Mammary epithelial cell (primary cell): ENCODE measurements at regions of chr19 and their contacts with region 1.

Region 1: DNA sequence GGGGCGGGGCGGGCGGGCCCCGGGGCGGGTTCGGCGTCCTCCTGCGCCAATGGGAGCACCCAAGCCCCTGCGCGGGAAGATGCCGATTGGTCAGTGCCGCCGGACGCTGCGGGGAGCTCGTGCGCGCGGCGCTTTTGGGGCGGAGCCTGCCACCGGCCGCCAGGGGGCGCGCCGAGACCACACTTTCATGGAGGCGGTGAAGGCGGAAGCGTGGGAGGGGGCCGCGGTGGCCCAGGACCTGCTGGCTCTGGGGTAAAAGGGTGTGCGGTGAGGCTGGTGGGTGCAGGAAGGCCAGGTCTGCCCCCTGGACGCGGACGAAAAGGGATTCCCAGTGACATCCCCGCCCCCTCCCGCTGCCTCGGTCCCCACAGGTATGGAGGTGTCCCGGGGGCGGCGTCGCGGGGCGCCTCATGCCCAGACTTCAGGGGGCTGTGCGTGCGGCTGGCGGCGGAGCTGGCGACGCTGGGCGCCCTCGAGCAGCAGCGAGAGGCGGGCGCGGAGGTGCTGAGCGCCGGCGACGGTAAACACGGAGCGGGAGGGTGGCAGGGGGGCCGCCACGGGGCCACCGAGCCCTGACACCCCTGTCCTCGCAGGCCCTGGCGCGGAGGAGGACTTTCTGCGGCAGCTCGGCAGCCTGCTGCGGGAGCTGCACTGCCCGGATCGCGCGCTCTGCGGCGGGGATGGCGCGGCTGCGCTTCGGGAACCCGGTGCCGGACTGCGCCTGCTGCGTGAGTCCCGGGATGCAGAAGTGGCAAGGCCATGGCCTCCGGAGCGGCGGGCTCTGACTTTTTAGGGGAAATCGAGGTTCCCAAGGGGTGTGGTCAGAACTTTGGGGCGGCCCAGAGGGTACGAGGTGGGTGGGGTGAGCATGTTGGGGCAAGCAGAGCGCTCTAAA is at the start of gene FAM98C:
- DNase-seq: peak; percentile 94
- H3K4me3 ChIP-seq: peak within 1 kb of the TSS; percentile 58 to 94 (median 83)
- H3K27ac ChIP-seq: no peak within 1 kb of the TSS
- H3K4me1 ChIP-seq: no peaks in the 10 kb centered on the region
- H3K27me3 ChIP-seq: no peaks in the 10 kb centered on the region
- CTCF ChIP-seq: peak; percentile 76 to 93
- total RNA-seq, gene FAM98C: 10.5 to 14.9 TPM

Region 2: DNA sequence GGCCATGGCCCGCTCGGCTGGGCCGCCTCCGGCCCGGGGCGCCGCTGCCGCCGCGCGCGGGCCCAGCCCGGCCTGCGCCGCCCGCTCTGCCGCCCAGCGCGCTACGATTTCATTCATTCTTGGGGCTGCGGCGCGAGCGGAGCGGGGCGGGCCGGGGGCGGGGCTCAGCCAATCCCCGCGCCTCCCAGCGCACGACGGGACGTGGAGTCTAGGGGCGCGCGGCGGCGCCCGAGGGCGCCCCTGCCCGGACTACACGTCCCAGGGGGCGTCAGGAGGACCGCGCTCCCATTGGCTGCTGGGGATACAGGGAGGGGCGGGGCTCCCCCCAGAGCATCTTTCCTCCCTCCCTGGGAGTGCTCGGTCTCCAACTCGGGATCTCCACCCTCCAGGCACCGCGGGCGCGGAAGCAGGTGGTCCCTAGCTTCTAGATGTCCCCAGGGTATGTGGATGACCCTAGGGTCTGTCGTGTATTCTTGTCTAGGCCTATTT is 173.6 kb before region 1 on chr19:
- CTCF ChIA-PET with region 1: interaction called, 12 read pairs
- dilution Hi-C with region 1: no loop called
- in situ Hi-C with region 1: no loop called
- intact Hi-C with region 1: loop called (anchors 5 kb)
- DNase-seq: peak; percentile 79
- H3K4me3 ChIP-seq: no peak overlapping the region
- H3K27ac ChIP-seq: no peak overlapping the region
- H3K4me1 ChIP-seq: peaks cover 14% of the 10 kb centered on the region
- H3K27me3 ChIP-seq: peaks cover 12% of the 10 kb centered on the region
- CTCF ChIP-seq: no peak

Region 3: DNA sequence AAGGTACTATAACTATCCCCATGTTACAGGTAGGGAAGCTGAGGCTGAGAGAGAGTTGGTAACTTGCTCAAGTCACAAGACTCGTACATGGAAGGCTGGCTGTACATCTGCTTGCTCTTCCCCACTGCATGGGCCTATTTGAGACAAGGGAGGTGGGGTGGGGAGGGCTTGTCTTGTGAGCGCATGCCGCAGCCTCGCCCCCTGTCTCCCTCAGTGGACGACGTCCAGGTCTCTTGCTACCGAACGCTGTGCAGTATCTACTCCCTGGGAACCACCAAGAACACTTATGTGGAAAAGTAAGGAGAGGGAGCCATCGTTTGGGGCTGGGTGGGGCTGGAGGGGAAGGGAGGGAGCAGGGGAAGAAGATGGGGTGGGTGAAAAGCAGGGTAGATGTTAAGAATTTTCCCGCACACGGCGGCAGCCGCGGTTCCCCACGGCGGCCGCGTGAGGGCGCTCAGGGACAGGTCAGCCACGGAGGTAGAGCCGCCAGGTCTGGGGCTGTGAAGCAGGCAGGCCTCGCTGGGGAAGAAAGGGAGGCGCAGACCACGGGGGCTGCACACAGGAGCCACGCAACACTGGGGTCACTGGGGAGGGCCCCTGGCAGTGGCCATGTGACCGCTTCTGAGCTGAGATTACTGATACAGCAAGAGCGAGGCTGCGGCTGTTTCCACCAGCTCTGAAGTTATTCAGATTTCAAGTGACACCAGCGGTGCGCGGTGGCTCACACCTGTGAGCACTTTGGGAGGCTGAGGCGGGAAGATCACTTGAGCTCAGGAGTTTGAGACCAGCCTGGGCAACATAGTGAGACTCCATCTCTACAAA is 111.8 kb after region 1 on chr19:
- CTCF ChIA-PET with region 1: no interaction called
- dilution Hi-C with region 1: no loop called
- in situ Hi-C with region 1: no loop called
- intact Hi-C with region 1: loop called (anchors 2 kb)
- DNase-seq: peak; percentile 45
- H3K4me3 ChIP-seq: peak overlapping the region in 1 of 3 experiments; percentile 4
- H3K27ac ChIP-seq: no peak overlapping the region
- H3K4me1 ChIP-seq: no peaks in the 10 kb centered on the region
- H3K27me3 ChIP-seq: no peaks in the 10 kb centered on the region
- CTCF ChIP-seq: peak; percentile 62 to 90

Region 4: GRCh38 chr19:38618590-38619360 is 215.6 kb after region 1 on chr19 and contains the start of gene EIF3K:
- CTCF ChIA-PET with region 1: no interaction called
- dilution Hi-C with region 1: no loop called
- in situ Hi-C with region 1: loop called in 1 of 2 experiments (anchors 10 kb)
- intact Hi-C with region 1: no loop called
- DNase-seq: peak; percentile 98
- H3K4me3 ChIP-seq: peak within 1 kb of the TSS; percentile 80 to 90 (median 88)
- H3K27ac ChIP-seq: peak within 1 kb of the TSS; percentile 80
- H3K4me1 ChIP-seq: peaks cover 18% of the 10 kb centered on the region
- H3K27me3 ChIP-seq: no peaks in the 10 kb centered on the region
- CTCF ChIP-seq: no peak
- total RNA-seq, gene EIF3K: 237 to 319 TPM

Region 5: DNA sequence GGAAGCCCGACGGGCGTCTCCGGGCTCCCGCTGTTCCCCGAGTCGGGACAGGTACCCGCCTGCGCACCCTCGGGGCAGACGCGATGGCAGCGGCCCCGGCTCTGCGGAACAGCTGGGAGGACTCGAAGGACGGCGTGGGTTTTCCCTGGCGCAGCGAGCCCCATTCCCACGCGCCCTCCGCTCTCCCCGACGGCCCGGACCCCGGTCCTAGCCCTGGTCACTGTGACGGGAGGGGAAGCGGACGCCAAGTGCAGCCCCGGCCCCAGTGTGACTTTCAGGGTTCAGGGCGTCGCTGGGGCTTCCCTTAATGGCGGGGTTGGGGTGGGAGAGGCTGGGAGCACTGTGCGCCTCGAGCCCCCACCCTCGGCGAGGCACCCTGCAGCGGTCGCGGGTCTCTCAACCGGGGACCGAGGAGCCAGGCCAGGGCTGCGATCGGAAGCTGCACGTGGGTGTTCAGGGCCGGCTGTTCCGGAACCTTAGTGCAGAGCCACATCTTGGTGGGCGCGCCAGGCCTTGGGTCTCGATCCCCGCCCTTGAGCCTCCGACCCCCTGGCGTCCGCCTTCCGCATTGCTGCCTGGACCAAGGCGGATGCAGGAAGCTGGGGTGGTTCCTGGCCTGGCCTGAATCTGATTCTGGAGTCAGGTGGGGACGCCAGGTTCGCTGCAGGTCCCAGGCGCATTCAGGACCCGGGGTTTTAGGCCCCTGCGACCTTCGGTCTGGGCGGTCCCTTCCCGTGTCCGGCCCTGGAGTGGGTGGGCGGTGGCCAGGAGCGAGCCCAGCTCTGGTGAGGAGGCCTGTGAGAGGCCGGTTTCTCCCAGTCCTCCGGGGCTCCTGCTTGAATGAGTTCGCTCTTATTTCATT is 389.3 kb after region 1 on chr19:
- CTCF ChIA-PET with region 1: no interaction called
- dilution Hi-C with region 1: loop called (anchors 25 kb)
- in situ Hi-C with region 1: no loop called
- intact Hi-C with region 1: no loop called
- DNase-seq: no peak
- H3K4me3 ChIP-seq: peak overlapping the region in 1 of 3 experiments; percentile 4
- H3K27ac ChIP-seq: peak overlapping the region; percentile 68
- H3K4me1 ChIP-seq: peaks cover 27% of the 10 kb centered on the region
- H3K27me3 ChIP-seq: no peaks in the 10 kb centered on the region
- CTCF ChIP-seq: peak; percentile 29 to 50

Region 6: DNA sequence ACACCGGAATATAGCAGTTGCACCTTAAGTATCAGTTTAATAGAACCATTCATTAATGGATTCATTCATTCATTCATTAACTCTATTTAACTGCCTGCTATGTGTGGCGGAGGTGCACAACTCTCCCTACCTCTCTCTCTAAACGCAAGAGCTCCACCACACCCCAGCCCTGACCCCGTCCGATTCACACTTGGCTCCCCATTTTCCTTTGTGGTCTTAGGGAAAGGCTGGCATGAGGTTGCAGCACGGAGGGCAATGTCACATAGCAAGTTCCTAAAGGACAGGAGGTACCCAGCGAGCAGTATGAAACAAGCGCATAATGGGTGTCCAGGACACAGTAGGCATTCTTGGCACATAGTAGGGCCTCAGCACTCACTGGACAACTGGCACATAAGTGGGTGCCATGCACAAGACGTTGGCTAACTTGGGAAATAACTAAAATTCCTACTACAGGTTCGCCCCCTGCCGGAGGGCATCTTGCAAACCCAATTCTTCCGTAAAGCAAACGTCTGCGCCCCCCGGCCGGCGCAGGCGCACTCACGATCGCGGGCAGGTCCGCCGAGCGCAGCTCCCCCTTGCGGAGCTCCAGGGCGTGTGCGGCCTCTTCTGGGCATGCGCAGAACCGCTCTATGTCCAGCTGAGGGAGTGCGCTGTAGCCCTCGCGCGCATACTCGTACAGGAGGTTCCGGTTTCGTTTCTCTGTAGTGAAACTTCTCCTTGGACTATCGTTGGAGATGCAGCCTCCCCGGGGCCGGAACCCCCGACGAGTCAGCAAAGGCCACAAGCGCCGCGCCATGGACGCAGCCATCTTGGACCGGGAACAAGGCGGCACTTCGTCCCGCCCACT is 526.9 kb after region 1 on chr19 and contains the start of gene SARS2:
- CTCF ChIA-PET with region 1: interaction called, 4 read pairs
- dilution Hi-C with region 1: no loop called
- in situ Hi-C with region 1: loop called in 1 of 2 experiments (anchors 25 kb)
- intact Hi-C with region 1: loop called (anchors 1 kb)
- DNase-seq: peak; percentile 84
- H3K4me3 ChIP-seq: peak within 1 kb of the TSS; percentile 84 to 90 (median 86)
- H3K27ac ChIP-seq: peak within 1 kb of the TSS; percentile 82
- H3K4me1 ChIP-seq: peaks cover 12% of the 10 kb centered on the region
- H3K27me3 ChIP-seq: no peaks in the 10 kb centered on the region
- CTCF ChIP-seq: peak; percentile 88 to 96
- total RNA-seq, gene SARS2: 18.0 to 28.0 TPM

Region 7: GRCh38 chr19:39110263-39110967 is 707.2 kb after region 1 on chr19:
- CTCF ChIA-PET with region 1: no interaction called
- dilution Hi-C with region 1: no loop called
- in situ Hi-C with region 1: no loop called
- intact Hi-C with region 1: loop called (anchors 5 kb)
- DNase-seq: no peak
- H3K4me3 ChIP-seq: no peak overlapping the region
- H3K27ac ChIP-seq: no peak overlapping the region
- H3K4me1 ChIP-seq: peaks cover 15% of the 10 kb centered on the region
- H3K27me3 ChIP-seq: no peaks in the 10 kb centered on the region
- CTCF ChIP-seq: peak; percentile 70 to 85